ENCODE measurements at regions of chr1 and their contacts with region 1.

Region 1: GRCh38 chr1:160777486-160778089 is 18.4 kb upstream of the LY9 start:
- DNase-seq: peak; percentile 57
- CTCF ChIP-seq: peak; percentile 74

Region 2: DNA sequence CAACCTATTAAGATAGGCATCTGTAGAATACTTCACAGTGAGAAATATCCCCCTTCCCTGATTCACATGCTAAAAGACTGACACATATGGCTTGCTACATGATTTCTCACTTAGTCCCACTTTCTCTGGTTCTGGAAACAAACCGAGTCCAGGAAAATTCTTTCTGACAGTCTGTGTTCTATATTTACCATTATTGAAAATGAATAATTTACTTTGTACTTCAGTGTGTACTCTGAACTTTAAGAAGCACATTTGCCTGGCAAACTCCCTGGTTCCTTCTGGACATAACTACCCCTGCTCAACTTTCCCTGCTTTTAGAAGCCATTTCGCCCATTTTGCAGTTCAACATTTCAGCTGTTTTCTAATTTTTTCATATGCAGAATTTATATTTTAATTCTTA is 1136.4 kb before region 1 on chr1:
- CTCF ChIA-PET with region 1: no interaction called
- POLR2A ChIA-PET with region 1: no interaction called
- DNase-seq: no peak
- CTCF ChIP-seq: no peak

Region 3: GRCh38 chr1:160410406-160411005 is 367.1 kb before region 1 on chr1:
- CTCF ChIA-PET with region 1: no interaction called
- POLR2A ChIA-PET with region 1: no interaction called
- DNase-seq: no peak
- CTCF ChIP-seq: no peak

Region 4: GRCh38 chr1:160711602-160712311 is 65.8 kb before region 1 on chr1 and contains the start of gene CD48:
- CTCF ChIA-PET with region 1: interaction called, 13 read pairs
- POLR2A ChIA-PET with region 1: no interaction called
- DNase-seq: peak; percentile 54
- CTCF ChIP-seq: no peak

Region 5: GRCh38 chr1:160739098-160739511 is 38.5 kb before region 1 on chr1 and contains the start of gene SLAMF7:
- CTCF ChIA-PET with region 1: interaction called, 17 read pairs
- POLR2A ChIA-PET with region 1: interaction called, 4 read pairs
- DNase-seq: peak; percentile 52
- CTCF ChIP-seq: no peak

Region 6: GRCh38 chr1:160795951-160796383 is 18.4 kb after region 1 on chr1 and contains the start of gene LY9:
- CTCF ChIA-PET with region 1: interaction called, 190 read pairs
- POLR2A ChIA-PET with region 1: no interaction called
- DNase-seq: peak; percentile 74
- CTCF ChIP-seq: no peak

Region 7: DNA sequence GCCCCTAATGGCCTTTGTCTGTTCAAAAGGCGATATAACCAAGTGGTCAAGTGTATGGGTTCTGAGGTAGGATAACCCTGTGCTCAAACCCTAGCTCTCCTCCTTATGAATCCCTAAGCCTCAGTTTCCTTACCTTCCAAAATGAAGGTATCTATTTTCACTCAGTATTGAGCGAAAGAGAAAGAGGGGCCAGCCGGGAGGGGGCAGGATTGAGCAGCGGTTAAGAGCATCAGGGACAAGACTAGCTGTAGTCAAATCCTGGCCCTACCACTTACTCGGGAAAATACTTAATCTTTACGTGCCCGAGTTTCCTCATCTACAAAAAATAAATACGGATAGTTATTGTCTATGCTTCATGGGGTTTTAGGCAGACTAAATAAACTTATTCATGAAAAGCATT is 44.0 kb after region 1 on chr1:
- CTCF ChIA-PET with region 1: interaction called, 11 read pairs
- POLR2A ChIA-PET with region 1: no interaction called
- DNase-seq: no peak
- CTCF ChIP-seq: no peak

Region 8: DNA sequence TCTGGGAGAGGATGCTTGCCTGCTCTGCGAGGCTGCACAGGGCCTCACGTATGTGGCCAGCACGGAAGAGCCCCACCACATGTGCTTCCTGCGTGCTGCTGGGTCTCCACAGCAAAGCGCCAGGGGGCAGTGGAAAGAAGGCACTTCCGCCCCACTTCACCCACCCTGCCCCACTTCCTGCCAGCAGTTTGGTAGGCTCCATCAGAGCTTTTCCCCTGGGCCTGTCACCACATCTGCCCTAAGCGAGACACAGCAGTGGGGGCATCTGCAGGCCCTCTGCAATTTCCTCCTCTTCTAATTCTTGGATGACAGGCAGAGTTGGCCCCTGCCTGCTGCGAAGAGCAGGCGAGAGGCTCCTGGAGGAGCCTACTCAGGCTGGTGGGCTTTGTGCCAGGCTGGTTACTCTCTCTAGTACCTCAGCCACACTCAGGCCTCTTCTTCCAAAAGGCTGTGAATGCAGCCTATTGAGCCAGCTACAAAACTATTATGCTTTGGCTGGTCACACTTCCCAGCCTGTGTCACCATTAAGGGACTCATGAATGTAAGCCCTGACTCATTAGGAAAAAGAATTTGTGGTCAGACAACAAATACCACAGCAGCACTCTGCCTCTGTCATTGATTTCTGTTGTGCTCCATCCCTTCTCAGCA is 60.1 kb after region 1 on chr1:
- CTCF ChIA-PET with region 1: interaction called, 81 read pairs
- POLR2A ChIA-PET with region 1: no interaction called
- DNase-seq: peak; percentile 73
- CTCF ChIP-seq: peak; percentile 41